Heart left ventricle (tissue), 16 donors: ENCODE measurements at regions of chr11 and their contacts with region 1.

Region 1: GRCh38 chr11:5550440-5551095 is 2.2 kb upstream of the OR52H1 start:
- DNase-seq: no peak
- ATAC-seq: no peak
- H3K4me3 ChIP-seq: no peak overlapping the region
- H3K27ac ChIP-seq: no peak overlapping the region
- H3K4me1 ChIP-seq: no peaks in the 10 kb centered on the region
- H3K27me3 ChIP-seq: no peaks in the 10 kb centered on the region
- CTCF ChIP-seq: no peak
- POLR2A ChIP-seq: no peak

Region 2: DNA sequence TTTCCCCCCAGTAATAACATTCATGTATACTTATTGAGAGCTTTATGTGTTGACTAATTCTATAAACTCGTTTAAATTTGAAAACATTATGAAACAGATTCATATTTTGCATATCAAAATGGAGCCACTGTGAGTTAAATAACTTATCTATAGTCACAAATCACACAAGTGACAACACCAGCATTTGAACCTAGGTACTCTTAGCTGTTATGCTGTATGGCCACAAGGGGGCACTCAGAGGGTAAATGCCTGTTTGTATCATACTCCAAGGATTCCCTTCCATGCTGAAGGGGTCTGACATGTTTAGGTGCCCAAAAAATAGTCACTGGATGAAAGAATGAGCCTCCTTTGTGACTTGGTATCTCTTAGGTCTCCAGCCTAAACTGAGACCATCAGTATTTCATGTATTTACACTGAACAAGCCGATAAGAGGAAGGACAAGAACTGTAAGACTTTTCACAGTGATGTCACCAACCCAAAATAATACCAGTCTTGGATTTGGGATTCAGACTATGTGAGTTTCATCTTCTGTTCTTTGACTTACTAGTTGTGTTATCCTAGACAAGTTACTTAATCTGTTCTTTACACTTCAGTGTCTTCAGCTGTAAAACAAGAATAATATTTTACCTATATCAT is 74.3 kb before region 1 on chr11:
- intact Hi-C with region 1: loop called in 5 of 10 experiments (anchors 2 to 10 kb)
- DNase-seq: peak in 3 of 5 donors; percentile 29 to 39 (median 37)
- ATAC-seq: peak in 1 of 4 donors; percentile 66
- H3K4me3 ChIP-seq: no peak overlapping the region
- H3K27ac ChIP-seq: no peak overlapping the region
- H3K4me1 ChIP-seq: no peaks in the 10 kb centered on the region
- H3K27me3 ChIP-seq: peaks cover 0 to 6% (median 0%) of the 10 kb centered on the region in 9 donors
- CTCF ChIP-seq: peak; percentile 68 to 89 (median 80)
- POLR2A ChIP-seq: no peak

Region 3: DNA sequence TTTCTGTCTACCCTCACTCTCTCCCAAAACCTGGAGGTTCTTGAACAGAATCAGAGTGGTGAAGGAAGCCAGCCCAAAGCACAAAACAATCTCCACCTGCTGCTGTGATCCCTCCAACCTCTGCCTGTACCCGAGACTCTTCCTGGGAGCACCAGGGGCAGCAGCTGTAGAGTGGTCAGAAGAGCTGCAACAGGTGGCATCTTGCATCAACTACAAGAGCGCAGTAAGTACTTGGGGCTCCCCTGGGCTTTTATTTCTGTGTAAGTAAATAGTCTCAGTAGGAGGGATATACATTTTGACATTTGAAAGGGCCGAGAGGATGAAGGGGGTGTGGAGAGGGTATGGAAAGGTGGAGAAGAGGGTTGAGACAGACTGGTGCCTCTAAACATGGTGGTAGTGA is 25.8 kb before region 1 on chr11:
- intact Hi-C with region 1: loop called in 1 of 10 experiments (anchors 2 kb)
- DNase-seq: no peak
- ATAC-seq: no peak
- H3K4me3 ChIP-seq: no peak overlapping the region
- H3K27ac ChIP-seq: no peak overlapping the region
- H3K4me1 ChIP-seq: peaks cover 0 to 9% (median 0%) of the 10 kb centered on the region in 12 donors
- H3K27me3 ChIP-seq: no peaks in the 10 kb centered on the region
- CTCF ChIP-seq: no peak
- POLR2A ChIP-seq: no peak